MCF 10A (cell line): ENCODE measurements at regions of chr12 and their contacts with region 1.

Region 1: DNA sequence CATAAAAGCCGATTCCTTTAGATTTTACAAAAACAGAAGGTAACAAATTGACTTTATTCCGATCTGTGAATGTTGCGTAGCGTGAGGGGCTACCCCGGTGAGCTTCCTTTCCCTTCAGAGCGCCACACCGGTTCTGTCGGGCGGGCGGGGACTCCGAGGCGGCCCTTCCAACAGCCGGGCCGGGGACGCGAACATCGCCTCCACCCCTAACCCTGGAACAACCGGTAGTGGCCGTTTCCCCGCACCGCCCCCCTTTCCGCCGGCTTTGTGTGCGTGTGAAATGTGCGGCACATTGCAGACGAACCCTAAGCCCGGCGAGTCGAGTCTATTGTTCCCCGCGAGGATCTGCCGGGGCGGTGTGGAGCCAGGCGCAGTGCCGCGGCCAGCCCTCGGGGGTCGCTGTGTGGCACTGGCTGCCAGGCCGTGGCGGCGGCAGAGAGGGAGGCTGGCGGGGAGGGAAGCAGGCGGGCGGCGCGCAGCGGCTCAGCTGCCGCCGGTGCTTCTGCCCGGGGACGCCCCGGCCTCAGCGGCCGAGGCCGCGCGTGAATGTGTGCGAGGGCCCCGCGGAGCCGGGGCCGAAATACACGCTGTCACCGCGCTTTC is 775 bp upstream of the ARID2 start:
- DNase-seq: peak; percentile 95
- H3K4me3 Mint-ChIP-seq: peak overlapping the region; percentile 81
- H3K27ac Mint-ChIP-seq: peak overlapping the region; percentile 99
- H3K4me1 Mint-ChIP-seq: peaks cover 14% of the 10 kb centered on the region
- H3K27me3 Mint-ChIP-seq: no peaks in the 10 kb centered on the region
- CTCF ChIP-seq: peak; percentile 86

Region 2: GRCh38 chr12:45170456-45171042 is 558.2 kb before region 1 on chr12:
- CTCF ChIA-PET with region 1: interaction called, 4 read pairs
- POLR2A ChIA-PET with region 1: interaction called, 3 read pairs
- intact Hi-C with region 1: loop called (anchors 5 kb)
- DNase-seq: peak; percentile 84
- H3K4me3 Mint-ChIP-seq: no peak overlapping the region
- H3K27ac Mint-ChIP-seq: no peak overlapping the region
- H3K4me1 Mint-ChIP-seq: no peaks in the 10 kb centered on the region
- H3K27me3 Mint-ChIP-seq: no peaks in the 10 kb centered on the region
- CTCF ChIP-seq: peak; percentile 85

Region 3: DNA sequence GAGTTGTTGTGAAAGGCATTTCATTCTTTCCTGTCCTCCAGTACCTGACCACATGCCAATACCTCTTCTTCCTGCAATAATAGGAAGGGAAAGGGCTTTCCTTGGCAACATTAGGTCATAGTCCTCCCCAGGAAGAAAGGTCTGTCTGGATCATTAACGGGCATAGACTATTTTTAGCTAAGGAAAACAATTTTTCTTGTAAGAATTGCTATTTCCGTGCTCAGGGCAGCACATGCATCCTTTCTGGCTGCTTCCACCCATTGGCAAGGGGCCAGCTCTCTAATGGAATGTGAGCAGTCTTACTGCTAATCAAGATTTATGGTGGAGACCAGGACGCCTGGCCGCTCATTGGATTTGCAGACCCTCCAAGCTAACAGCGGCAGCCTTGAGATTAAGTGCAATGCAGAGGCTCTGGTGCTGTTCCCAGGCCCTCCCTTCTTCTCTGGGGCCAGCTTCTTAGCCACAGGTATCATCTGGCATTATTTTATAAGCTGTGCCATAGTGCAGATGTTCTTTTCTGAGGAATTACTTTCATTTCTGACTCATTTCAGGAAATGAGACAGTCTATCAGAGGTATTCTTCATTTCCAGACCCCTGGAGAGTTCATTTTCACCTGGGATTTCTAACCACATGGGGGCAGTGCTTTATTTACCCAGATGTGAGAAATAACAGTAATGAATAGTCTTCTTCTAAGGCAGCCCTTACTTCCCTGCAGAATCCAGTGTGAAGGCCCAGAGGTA is 459.9 kb before region 1 on chr12:
- CTCF ChIA-PET with region 1: interaction called, 5 read pairs
- POLR2A ChIA-PET with region 1: no interaction called
- intact Hi-C with region 1: loop called (anchors 2 kb)
- DNase-seq: peak; percentile 89
- H3K4me3 Mint-ChIP-seq: peak overlapping the region; percentile 58
- H3K27ac Mint-ChIP-seq: peak overlapping the region; percentile 61
- H3K4me1 Mint-ChIP-seq: peaks cover 21% of the 10 kb centered on the region
- H3K27me3 Mint-ChIP-seq: no peaks in the 10 kb centered on the region
- CTCF ChIP-seq: peak; percentile 63

Region 4: DNA sequence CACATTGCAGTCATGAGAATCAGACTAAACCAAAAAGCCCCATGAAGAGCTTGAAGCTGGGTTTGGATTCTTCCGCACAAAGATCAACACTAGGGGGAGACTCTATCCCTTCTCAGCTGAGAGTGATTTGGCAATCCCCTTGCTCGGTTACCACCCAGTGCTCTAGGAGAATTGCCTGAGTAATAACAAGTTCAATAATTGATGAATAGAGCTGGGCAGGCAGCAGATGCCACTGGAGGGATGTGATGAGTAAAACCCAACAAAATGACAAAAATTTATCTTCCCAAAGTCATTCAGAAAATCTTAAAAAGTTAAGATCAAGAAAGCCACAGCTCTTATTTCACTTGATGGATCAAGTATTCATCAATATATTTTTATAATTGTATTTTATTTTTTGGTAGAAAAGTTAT is 184.8 kb before region 1 on chr12:
- CTCF ChIA-PET with region 1: interaction called, 97 read pairs
- POLR2A ChIA-PET with region 1: interaction called, 83 read pairs
- intact Hi-C with region 1: loop called (anchors 1 kb)
- DNase-seq: peak; percentile 81
- H3K4me3 Mint-ChIP-seq: no peak overlapping the region
- H3K27ac Mint-ChIP-seq: no peak overlapping the region
- H3K4me1 Mint-ChIP-seq: no peaks in the 10 kb centered on the region
- H3K27me3 Mint-ChIP-seq: no peaks in the 10 kb centered on the region
- CTCF ChIP-seq: peak; percentile 83

Region 5: DNA sequence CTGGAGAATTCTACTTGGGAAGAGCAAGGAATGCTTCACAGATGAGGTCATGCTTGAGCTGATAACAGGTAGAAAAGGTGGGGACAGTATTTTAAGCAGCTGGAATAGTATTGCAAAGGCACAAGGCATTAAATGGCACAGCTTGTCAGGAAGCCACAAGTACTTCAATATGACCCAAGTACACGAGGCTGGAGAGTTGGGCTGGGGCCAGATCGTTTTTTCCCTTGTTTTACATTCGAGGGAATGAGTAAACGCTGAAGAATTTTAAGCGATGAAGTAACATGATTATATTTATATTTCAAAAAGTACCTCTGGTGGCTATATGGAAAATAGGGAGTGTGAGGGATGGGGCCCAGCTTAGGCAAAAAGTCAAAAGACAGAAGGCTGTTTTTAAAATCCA is 54.1 kb before region 1 on chr12:
- CTCF ChIA-PET with region 1: interaction called, 6 read pairs
- POLR2A ChIA-PET with region 1: interaction called, 23 read pairs
- intact Hi-C with region 1: loop called (anchors 1 kb)
- DNase-seq: peak; percentile 92
- H3K4me3 Mint-ChIP-seq: no peak overlapping the region
- H3K27ac Mint-ChIP-seq: no peak overlapping the region
- H3K4me1 Mint-ChIP-seq: peaks cover 7% of the 10 kb centered on the region
- H3K27me3 Mint-ChIP-seq: no peaks in the 10 kb centered on the region
- CTCF ChIP-seq: no peak

Region 6: DNA sequence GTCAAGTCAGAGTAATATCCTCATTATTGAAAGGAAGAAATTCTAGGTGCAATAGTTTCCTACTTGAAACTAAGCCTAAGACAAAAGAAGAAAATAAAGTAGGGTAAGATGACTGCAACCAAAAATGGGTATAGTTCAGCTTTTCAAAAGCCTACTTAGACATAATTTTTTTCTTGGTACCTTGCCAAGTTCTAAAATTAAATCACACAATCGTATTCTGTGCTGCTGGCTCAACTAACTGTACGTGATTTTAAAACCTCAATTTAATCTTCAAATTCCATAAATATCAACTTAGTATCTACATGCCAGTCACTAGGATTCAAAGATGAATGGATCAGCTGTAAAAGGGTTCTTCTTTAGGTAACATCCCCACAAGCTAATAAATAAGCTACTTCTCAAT is 204.8 kb after region 1 on chr12:
- CTCF ChIA-PET with region 1: no interaction called
- POLR2A ChIA-PET with region 1: no interaction called
- intact Hi-C with region 1: no loop called
- DNase-seq: no peak
- H3K4me3 Mint-ChIP-seq: no peak overlapping the region
- H3K27ac Mint-ChIP-seq: no peak overlapping the region
- H3K4me1 Mint-ChIP-seq: no peaks in the 10 kb centered on the region
- H3K27me3 Mint-ChIP-seq: no peaks in the 10 kb centered on the region
- CTCF ChIP-seq: no peak

Region 7: GRCh38 chr12:45990468-45991283 is 261.9 kb after region 1 on chr12 and contains the start of gene SCAF11:
- CTCF ChIA-PET with region 1: interaction called, 5 read pairs
- POLR2A ChIA-PET with region 1: interaction called, 38 read pairs
- intact Hi-C with region 1: loop called (anchors 2 kb)
- DNase-seq: peak; percentile 99
- H3K4me3 Mint-ChIP-seq: peak within 1 kb of the TSS; percentile 91
- H3K27ac Mint-ChIP-seq: peak within 1 kb of the TSS; percentile 93
- H3K4me1 Mint-ChIP-seq: peaks cover 31% of the 10 kb centered on the region
- H3K27me3 Mint-ChIP-seq: no peaks in the 10 kb centered on the region
- CTCF ChIP-seq: peak; percentile 85
- total RNA-seq, gene SCAF11: 106 and 107 TPM in 2 replicates